ENCODE measurements at regions of chr2 and their contacts with region 1.

Region 1: GRCh38 chr2:14634201-14634884 is 1.8 kb downstream of the LRATD1 start:
- DNase-seq: peak; percentile 91
- ATAC-seq: peak; percentile 50
- H3K4me3 ChIP-seq: peak overlapping the region; percentile 91
- H3K27ac ChIP-seq: peak overlapping the region; percentile 84
- H3K4me1 ChIP-seq: peaks cover 26% of the 10 kb centered on the region
- H3K27me3 ChIP-seq: no peaks in the 10 kb centered on the region
- CTCF ChIP-seq: peak; percentile 85

Region 2: DNA sequence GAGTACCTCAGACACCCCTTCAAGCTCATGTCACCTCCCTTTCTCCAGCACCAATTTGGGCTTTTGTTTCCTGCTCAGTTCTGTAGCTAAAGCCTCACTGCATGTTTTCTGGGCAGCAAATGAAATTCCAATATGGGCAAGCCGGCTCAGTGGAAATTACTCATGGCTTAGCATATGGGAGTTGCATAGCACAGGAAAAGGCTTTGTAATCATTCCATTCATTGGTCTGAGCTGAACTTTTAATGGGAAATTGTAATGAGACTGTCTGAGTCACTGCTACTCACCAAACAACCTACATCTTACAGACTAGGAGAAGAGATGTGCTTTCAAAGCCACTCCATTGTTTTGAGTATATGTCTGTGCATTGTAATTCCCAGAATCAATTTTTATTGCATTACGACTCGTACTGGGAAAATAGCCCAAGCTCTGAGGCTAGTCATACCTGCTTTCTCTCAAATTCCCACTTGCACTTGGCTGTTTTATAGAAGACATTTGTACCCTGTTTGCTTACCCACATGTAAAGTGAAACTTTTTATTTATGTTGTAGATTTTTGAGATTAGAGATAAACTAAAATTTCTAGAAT is 141.3 kb before region 1 on chr2:
- CTCF ChIA-PET with region 1: interaction called, 6 read pairs
- POLR2A ChIA-PET with region 1: interaction called, 5 read pairs
- intact Hi-C with region 1: loop called (anchors 1 kb)
- DNase-seq: peak; percentile 97
- ATAC-seq: peak; percentile 96
- H3K4me3 ChIP-seq: peak overlapping the region; percentile 23; the same call in 1 of the 2 replicates
- H3K27ac ChIP-seq: peak overlapping the region; percentile 94
- H3K4me1 ChIP-seq: peaks cover 26% of the 10 kb centered on the region
- H3K27me3 ChIP-seq: no peaks in the 10 kb centered on the region
- CTCF ChIP-seq: no peak

Region 3: GRCh38 chr2:14524057-14524802 is 110.1 kb before region 1 on chr2:
- CTCF ChIA-PET with region 1: no interaction called
- POLR2A ChIA-PET with region 1: interaction called, 8 read pairs
- intact Hi-C with region 1: loop called (anchors 1 kb)
- DNase-seq: peak; percentile 93
- ATAC-seq: peak; percentile 94
- H3K4me3 ChIP-seq: peak overlapping the region; percentile 29; the same call in 1 of the 2 replicates
- H3K27ac ChIP-seq: peak overlapping the region; percentile 95
- H3K4me1 ChIP-seq: peaks cover 45% of the 10 kb centered on the region
- H3K27me3 ChIP-seq: no peaks in the 10 kb centered on the region
- CTCF ChIP-seq: peak; percentile 18; the same call in 1 of the 2 replicates

Region 4: DNA sequence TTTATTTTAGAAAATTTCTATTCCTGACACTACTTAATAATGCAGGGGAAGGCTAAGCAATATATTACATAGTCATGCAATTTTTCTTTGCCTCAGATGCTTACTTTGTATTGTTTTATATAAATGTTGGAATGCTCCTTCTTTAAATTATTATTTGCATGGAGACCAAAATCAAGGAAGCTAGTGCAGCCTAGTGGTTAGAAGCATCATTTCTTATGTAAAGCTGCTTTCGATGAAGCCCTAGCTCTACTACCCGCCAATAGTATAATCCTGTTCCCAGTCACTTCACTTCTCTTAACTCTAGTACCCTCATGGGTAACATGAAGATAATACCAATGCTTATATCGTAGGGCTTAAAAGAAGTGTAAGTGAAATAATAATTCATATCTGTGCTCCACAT is 197.1 kb after region 1 on chr2:
- CTCF ChIA-PET with region 1: no interaction called
- POLR2A ChIA-PET with region 1: no interaction called
- intact Hi-C with region 1: loop called (anchors 1 kb)
- DNase-seq: peak; percentile 41
- ATAC-seq: peak; percentile 42; the same call in 1 of the 2 replicates
- H3K4me3 ChIP-seq: no peak overlapping the region
- H3K27ac ChIP-seq: no peak overlapping the region
- H3K4me1 ChIP-seq: peaks cover 20% of the 10 kb centered on the region
- H3K27me3 ChIP-seq: no peaks in the 10 kb centered on the region
- CTCF ChIP-seq: peak; percentile 63

Region 5: GRCh38 chr2:14944562-14945346 is 310.4 kb after region 1 on chr2:
- CTCF ChIA-PET with region 1: no interaction called
- POLR2A ChIA-PET with region 1: no interaction called
- intact Hi-C with region 1: loop called (anchors 1 kb)
- DNase-seq: peak; percentile 64
- ATAC-seq: peak; percentile 81
- H3K4me3 ChIP-seq: no peak overlapping the region
- H3K27ac ChIP-seq: no peak overlapping the region
- H3K4me1 ChIP-seq: no peaks in the 10 kb centered on the region
- H3K27me3 ChIP-seq: no peaks in the 10 kb centered on the region
- CTCF ChIP-seq: peak; percentile 86

Measured in PC-3 (cell line).